IMR-90 (cell line): ENCODE measurements at regions of chr6 and their contacts with region 1.

Region 1: GRCh38 chr6:43402820-43403219 is 24.5 kb upstream of the ABCC10 start:
- DNase-seq: no peak
- ATAC-seq: no peak
- H3K4me3 ChIP-seq: no peak overlapping the region
- H3K27ac ChIP-seq: no peak overlapping the region
- H3K4me1 ChIP-seq: no peaks in the 10 kb centered on the region
- H3K27me3 ChIP-seq: peaks cover 34% of the 10 kb centered on the region
- CTCF ChIP-seq: no peak
- POLR2A ChIP-seq: no peak
- RAD21 ChIP-seq: no peak

Region 2: GRCh38 chr6:43045371-43045930 is 357.4 kb before region 1 on chr6:
- CTCF ChIA-PET with region 1: no interaction called
- POLR2A ChIA-PET with region 1: interaction called, 18 read pairs
- dilution Hi-C with region 1: no loop called
- in situ Hi-C with region 1: no loop called
- intact Hi-C with region 1: no loop called
- DNase-seq: no peak
- ATAC-seq: no peak
- H3K4me3 ChIP-seq: no peak overlapping the region
- H3K27ac ChIP-seq: no peak overlapping the region
- H3K4me1 ChIP-seq: no peaks in the 10 kb centered on the region; the same call in 1 of the 2 replicates
- H3K27me3 ChIP-seq: no peaks in the 10 kb centered on the region
- CTCF ChIP-seq: no peak
- POLR2A ChIP-seq: no peak
- RAD21 ChIP-seq: no peak

Region 3: DNA sequence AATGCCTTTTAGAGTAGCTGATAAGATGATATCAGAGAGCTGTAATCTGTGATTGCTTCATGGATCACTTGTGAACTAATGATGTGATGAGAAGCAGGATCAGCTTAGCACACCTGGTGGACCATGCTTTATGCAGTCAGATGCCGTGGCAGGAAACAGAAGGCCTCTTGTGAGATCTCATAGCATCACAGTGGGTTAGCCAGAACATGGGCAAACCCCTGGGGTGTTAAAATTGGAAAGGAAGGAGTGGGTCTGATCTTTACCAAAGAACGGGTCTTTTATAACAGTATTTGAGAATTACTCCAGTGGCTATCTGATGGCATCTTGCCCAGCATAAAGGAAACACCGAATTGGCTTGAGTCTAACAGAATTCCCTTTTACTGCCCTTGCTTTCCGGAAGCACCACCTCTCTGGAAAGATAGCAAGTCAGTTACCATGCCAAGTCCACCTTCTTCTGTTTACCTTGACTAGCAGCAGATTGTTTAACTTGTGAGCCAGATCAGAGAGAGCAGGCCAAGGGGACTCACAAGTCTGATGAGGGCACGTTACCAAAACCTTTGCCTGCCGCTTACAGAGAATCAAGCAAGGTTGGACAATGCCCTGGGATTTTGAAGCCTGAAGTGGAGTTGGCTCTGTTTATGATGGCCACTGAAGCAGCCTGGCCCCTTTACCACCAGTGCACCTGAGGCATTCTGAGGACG is 252.6 kb before region 1 on chr6:
- CTCF ChIA-PET with region 1: interaction called, 11 read pairs
- POLR2A ChIA-PET with region 1: no interaction called
- dilution Hi-C with region 1: no loop called
- in situ Hi-C with region 1: no loop called
- intact Hi-C with region 1: no loop called
- DNase-seq: peak; percentile 16
- ATAC-seq: no peak
- H3K4me3 ChIP-seq: no peak overlapping the region
- H3K27ac ChIP-seq: no peak overlapping the region
- H3K4me1 ChIP-seq: peaks cover 1% of the 10 kb centered on the region; the same call in 1 of the 2 replicates
- H3K27me3 ChIP-seq: no peaks in the 10 kb centered on the region
- CTCF ChIP-seq: no peak
- POLR2A ChIP-seq: no peak
- RAD21 ChIP-seq: no peak

Region 4: GRCh38 chr6:43211955-43212354 is 190.9 kb before region 1 on chr6:
- CTCF ChIA-PET with region 1: no interaction called
- POLR2A ChIA-PET with region 1: no interaction called
- dilution Hi-C with region 1: no loop called
- in situ Hi-C with region 1: no loop called
- intact Hi-C with region 1: no loop called
- DNase-seq: no peak
- ATAC-seq: no peak
- H3K4me3 ChIP-seq: no peak overlapping the region
- H3K27ac ChIP-seq: no peak overlapping the region
- H3K4me1 ChIP-seq: no peaks in the 10 kb centered on the region
- H3K27me3 ChIP-seq: no peaks in the 10 kb centered on the region
- CTCF ChIP-seq: no peak
- POLR2A ChIP-seq: no peak
- RAD21 ChIP-seq: no peak

Region 5: DNA sequence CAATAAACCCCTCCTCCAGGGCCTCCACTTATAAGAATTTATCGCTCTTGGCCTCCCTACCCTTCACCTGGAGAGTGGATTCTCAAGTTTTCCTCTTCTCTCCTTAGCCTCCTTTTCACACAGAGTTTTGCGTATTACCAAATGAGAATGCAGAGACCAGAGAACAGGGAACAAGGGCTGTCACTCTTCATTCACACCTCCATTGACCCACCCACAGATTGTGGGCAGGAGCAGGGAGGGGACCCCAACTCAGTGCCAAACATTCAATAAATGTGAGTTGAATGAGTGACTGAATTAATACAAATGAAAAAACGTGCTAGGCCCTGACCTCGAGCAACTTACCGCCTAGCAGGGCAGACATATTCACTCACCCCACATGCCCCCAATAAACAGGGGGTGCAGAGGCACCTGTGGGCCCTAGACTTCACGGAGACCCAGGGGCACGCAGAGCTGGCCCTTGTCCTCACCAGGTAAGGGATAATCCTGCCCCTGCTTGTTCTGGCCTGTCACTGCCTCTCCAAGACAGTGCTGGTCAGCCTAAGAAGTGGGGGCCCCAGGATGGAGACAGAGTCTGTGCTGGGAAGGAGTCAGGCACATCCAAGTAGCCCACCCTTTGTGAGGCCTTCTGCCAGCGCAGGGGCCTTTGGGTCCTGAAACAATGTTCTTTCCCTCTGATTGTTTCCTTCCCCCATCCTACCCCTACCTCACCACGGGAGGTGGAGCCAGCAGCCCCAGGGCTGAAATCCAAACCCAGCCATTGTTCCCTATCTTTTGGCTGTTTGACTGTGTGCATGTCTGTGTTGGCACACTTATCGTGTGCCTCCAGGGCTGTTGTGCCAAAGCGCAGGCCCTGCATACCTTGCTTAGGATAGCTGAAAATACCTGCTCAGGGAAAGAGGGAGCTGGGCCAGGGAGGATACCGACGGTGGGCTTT is 66.2 kb after region 1 on chr6:
- CTCF ChIA-PET with region 1: no interaction called
- POLR2A ChIA-PET with region 1: no interaction called
- dilution Hi-C with region 1: no loop called
- in situ Hi-C with region 1: no loop called
- intact Hi-C with region 1: no loop called
- DNase-seq: no peak
- ATAC-seq: no peak
- H3K4me3 ChIP-seq: no peak overlapping the region
- H3K27ac ChIP-seq: no peak overlapping the region
- H3K4me1 ChIP-seq: no peaks in the 10 kb centered on the region
- H3K27me3 ChIP-seq: peaks cover 21% of the 10 kb centered on the region
- CTCF ChIP-seq: no peak
- POLR2A ChIP-seq: no peak
- RAD21 ChIP-seq: no peak